Sciatic nerve (tissue), 2 donors: ENCODE measurements at regions of chr16 and their contacts with region 1.

Region 1: GRCh38 chr16:6453742-6454141 is 878.9 kb upstream of the RBFOX1 start:
- DNase-seq: no peak
- ATAC-seq: no peak

Region 2: GRCh38 chr16:5642436-5642835 is 811.3 kb before region 1 on chr16:
- intact Hi-C with region 1: loop called (anchors 5 kb)
- DNase-seq: no peak
- ATAC-seq: no peak

Region 3: DNA sequence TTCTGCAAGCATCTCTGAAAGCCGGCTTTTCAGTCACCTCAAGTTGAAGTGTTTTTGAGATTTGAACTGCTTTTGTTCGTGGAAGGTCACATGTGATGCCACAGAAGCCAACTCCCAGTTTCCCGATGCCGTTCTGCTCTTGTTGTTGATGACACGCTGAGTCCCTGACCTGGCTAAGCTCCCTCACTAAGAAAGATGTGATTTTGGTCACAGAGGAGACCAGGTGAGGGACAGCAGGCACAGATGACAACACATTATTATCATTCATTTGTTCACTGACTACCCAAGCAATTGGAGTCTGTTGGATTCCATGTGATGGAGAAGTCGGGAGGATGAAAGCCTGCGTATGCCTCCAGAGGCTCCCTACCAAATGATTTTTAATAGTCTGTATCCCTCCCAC is 56.5 kb after region 1 on chr16:
- intact Hi-C with region 1: no loop called
- DNase-seq: no peak
- ATAC-seq: no peak

Region 4: GRCh38 chr16:6704306-6704930 is 250.7 kb after region 1 on chr16:
- intact Hi-C with region 1: no loop called
- DNase-seq: no peak
- ATAC-seq: no peak